ENCODE measurements at regions of chr14 and their contacts with region 1.

Region 1: DNA sequence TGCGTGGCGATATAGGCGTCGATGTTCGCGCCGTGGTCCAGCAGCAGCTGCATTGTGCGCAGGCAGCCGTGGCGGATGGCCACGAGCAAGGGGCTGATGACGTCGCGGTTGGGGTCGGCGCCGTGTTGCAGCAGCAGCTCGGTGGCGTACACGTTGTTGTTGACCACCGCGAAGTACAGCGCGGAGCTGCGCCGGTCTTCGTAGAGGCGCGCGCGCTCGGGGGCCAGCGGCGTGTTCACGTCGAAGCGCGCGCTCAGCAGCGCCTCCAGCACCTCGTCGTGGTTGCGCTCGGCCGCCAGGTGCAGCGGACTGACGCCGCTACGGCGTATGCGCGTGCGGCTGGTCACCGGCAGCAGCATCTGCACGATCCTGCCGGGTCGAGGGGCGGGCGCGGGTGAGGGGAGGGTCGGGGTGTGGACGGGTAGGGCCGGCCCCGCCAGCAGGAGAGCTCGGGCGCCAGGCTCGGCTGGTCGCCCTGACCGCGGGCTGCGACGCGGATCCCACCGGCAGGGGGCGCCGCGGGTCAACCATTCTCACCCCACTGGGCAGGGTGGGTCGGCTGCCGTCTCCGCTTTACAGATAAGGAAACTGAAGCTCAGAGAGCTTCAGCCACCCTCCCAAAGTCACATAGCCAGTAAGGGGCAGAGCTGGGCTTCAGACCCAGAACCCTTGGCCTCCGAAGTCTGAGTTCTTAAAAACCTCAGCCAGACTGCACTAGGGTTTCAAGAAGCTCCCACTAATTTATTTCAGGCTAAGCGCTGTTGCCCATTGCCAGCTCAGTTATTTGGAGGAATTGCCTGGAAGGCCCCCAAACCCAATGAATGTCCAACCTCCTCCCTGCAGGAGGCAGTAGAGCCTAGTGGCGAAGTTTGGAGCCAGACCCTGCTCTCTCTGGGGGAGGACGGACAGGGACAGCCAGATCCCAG is 12.4 kb downstream of the FAM181A start:
- DNase-seq: peak; percentile 84 to 92 (median 85)
- H3K4me3 ChIP-seq: peak overlapping the region in 1 of 2 donors; percentile 41
- H3K4me3 Mint-ChIP-seq: peak overlapping the region; percentile 53 to 80 (median 72)
- H3K27ac ChIP-seq: no peak overlapping the region
- H3K27ac Mint-ChIP-seq: peak overlapping the region in 3 of 7 donors; percentile 41 to 53 (median 41)
- H3K4me1 ChIP-seq: peaks cover 3% of the 10 kb centered on the region
- H3K4me1 Mint-ChIP-seq: peaks cover 2 to 13% (median 8%) of the 10 kb centered on the region in 4 donors
- H3K27me3 ChIP-seq: no peaks in the 10 kb centered on the region
- H3K27me3 Mint-ChIP-seq: no peaks in the 10 kb centered on the region

Region 2: GRCh38 chr14:93811676-93812075 is 127.9 kb before region 1 on chr14:
- CTCF ChIA-PET with region 1: no interaction called
- POLR2A ChIA-PET with region 1: no interaction called
- intact Hi-C with region 1: no loop called
- DNase-seq: no peak
- H3K4me3 ChIP-seq: no peak overlapping the region
- H3K4me3 Mint-ChIP-seq: no peak overlapping the region
- H3K27ac ChIP-seq: no peak overlapping the region
- H3K27ac Mint-ChIP-seq: no peak overlapping the region
- H3K4me1 ChIP-seq: no peaks in the 10 kb centered on the region
- H3K4me1 Mint-ChIP-seq: peaks cover 0 to 2% (median under 1%) of the 10 kb centered on the region in 4 donors
- H3K27me3 ChIP-seq: no peaks in the 10 kb centered on the region
- H3K27me3 Mint-ChIP-seq: peaks cover 2 to 9% of the 10 kb centered on the region in 2 donors

Region 3: GRCh38 chr14:93959239-93960107 is 19.9 kb after region 1 on chr14:
- CTCF ChIA-PET with region 1: interaction called, 1,377 read pairs
- POLR2A ChIA-PET with region 1: interaction called, 87 read pairs
- intact Hi-C with region 1: loop called (anchors 1 kb)
- DNase-seq: peak; percentile 89 to 99 (median 91)
- H3K4me3 ChIP-seq: peak overlapping the region; percentile 18 to 21
- H3K4me3 Mint-ChIP-seq: peak overlapping the region; percentile 75 to 89 (median 82)
- H3K27ac ChIP-seq: peak overlapping the region; percentile 77
- H3K27ac Mint-ChIP-seq: peak overlapping the region; percentile 96 to 100 (median 99)
- H3K4me1 ChIP-seq: peaks cover 100% of the 10 kb centered on the region
- H3K4me1 Mint-ChIP-seq: peaks cover 80 to 100% (median 93%) of the 10 kb centered on the region in 4 donors
- H3K27me3 ChIP-seq: no peaks in the 10 kb centered on the region
- H3K27me3 Mint-ChIP-seq: no peaks in the 10 kb centered on the region

Region 4: GRCh38 chr14:93975791-93976476 is 36.4 kb after region 1 on chr14:
- CTCF ChIA-PET with region 1: interaction called, 1,377 read pairs
- POLR2A ChIA-PET with region 1: interaction called, 146 read pairs
- intact Hi-C with region 1: no loop called
- DNase-seq: peak in 2 of 5 donors; percentile 17 to 40
- H3K4me3 ChIP-seq: peak overlapping the region; percentile 30 to 53
- H3K4me3 Mint-ChIP-seq: peak overlapping the region; percentile 58 to 84 (median 76)
- H3K27ac ChIP-seq: peak overlapping the region; percentile 10
- H3K27ac Mint-ChIP-seq: peak overlapping the region in 6 of 7 donors; percentile 5 to 96 (median 56)
- H3K4me1 ChIP-seq: peaks cover 79% of the 10 kb centered on the region
- H3K4me1 Mint-ChIP-seq: peaks cover 52 to 80% (median 66%) of the 10 kb centered on the region in 4 donors
- H3K27me3 ChIP-seq: no peaks in the 10 kb centered on the region
- H3K27me3 Mint-ChIP-seq: no peaks in the 10 kb centered on the region

Region 5: GRCh38 chr14:94011795-94012194 is 72.2 kb after region 1 on chr14:
- CTCF ChIA-PET with region 1: interaction called, 28 read pairs
- POLR2A ChIA-PET with region 1: interaction called, 5 read pairs
- intact Hi-C with region 1: no loop called
- DNase-seq: peak; percentile 52 to 63 (median 56)
- H3K4me3 ChIP-seq: no peak overlapping the region
- H3K4me3 Mint-ChIP-seq: peak overlapping the region in 7 of 8 donors; percentile 38 to 74 (median 62)
- H3K27ac ChIP-seq: no peak overlapping the region
- H3K27ac Mint-ChIP-seq: peak overlapping the region in 4 of 7 donors; percentile 3 to 68 (median 56)
- H3K4me1 ChIP-seq: peaks cover 51% of the 10 kb centered on the region
- H3K4me1 Mint-ChIP-seq: peaks cover 34 to 58% (median 47%) of the 10 kb centered on the region in 4 donors
- H3K27me3 ChIP-seq: no peaks in the 10 kb centered on the region
- H3K27me3 Mint-ChIP-seq: no peaks in the 10 kb centered on the region

Region 6: GRCh38 chr14:94026173-94026888 is 86.8 kb after region 1 on chr14 and contains the start of gene OTUB2:
- CTCF ChIA-PET with region 1: interaction called, 29 read pairs
- POLR2A ChIA-PET with region 1: interaction called, 4 read pairs
- intact Hi-C with region 1: no loop called
- DNase-seq: peak; percentile 96 to 97 (median 97)
- H3K4me3 ChIP-seq: peak within 1 kb of the TSS in 1 of 2 donors; percentile 56
- H3K4me3 Mint-ChIP-seq: peak within 1 kb of the TSS; percentile 81 to 88 (median 84)
- H3K27ac ChIP-seq: peak within 1 kb of the TSS; percentile 13
- H3K27ac Mint-ChIP-seq: peak within 1 kb of the TSS in 6 of 7 donors; percentile 42 to 89 (median 74)
- H3K4me1 ChIP-seq: peaks cover 45% of the 10 kb centered on the region
- H3K4me1 Mint-ChIP-seq: peaks cover 30 to 55% (median 42%) of the 10 kb centered on the region in 4 donors
- H3K27me3 ChIP-seq: no peaks in the 10 kb centered on the region
- H3K27me3 Mint-ChIP-seq: no peaks in the 10 kb centered on the region
- total RNA-seq, gene OTUB2: 0.42 to 0.67 TPM

Region 7: GRCh38 chr14:94129111-94129757 is 189.7 kb after region 1 on chr14 and contains the start of gene IFI27L2:
- CTCF ChIA-PET with region 1: interaction called, 10 read pairs
- POLR2A ChIA-PET with region 1: interaction called, 3 read pairs
- intact Hi-C with region 1: no loop called
- DNase-seq: peak; percentile 34 to 80 (median 46)
- H3K4me3 ChIP-seq: peak within 1 kb of the TSS; percentile 50 to 82
- H3K4me3 Mint-ChIP-seq: peak within 1 kb of the TSS; percentile 86 to 93 (median 90)
- H3K27ac ChIP-seq: peak within 1 kb of the TSS; percentile 46
- H3K27ac Mint-ChIP-seq: peak within 1 kb of the TSS; percentile 77 to 88 (median 84)
- H3K4me1 ChIP-seq: peaks cover 18% of the 10 kb centered on the region
- H3K4me1 Mint-ChIP-seq: peaks cover 12 to 25% (median 20%) of the 10 kb centered on the region in 4 donors
- H3K27me3 ChIP-seq: no peaks in the 10 kb centered on the region
- H3K27me3 Mint-ChIP-seq: no peaks in the 10 kb centered on the region
- total RNA-seq, gene IFI27L2: 34.0 to 38.2 TPM

Region 8: GRCh38 chr14:94180655-94181271 is 241.2 kb after region 1 on chr14:
- CTCF ChIA-PET with region 1: interaction called, 6 read pairs
- POLR2A ChIA-PET with region 1: no interaction called
- intact Hi-C with region 1: loop called (anchors 1 kb)
- DNase-seq: peak; percentile 68 to 81 (median 73)
- H3K4me3 ChIP-seq: peak overlapping the region in 1 of 2 donors; percentile 46
- H3K4me3 Mint-ChIP-seq: peak overlapping the region; percentile 2 to 79 (median 58)
- H3K27ac ChIP-seq: peak overlapping the region; percentile 29
- H3K27ac Mint-ChIP-seq: peak overlapping the region; percentile 18 to 91 (median 66)
- H3K4me1 ChIP-seq: peaks cover 10% of the 10 kb centered on the region
- H3K4me1 Mint-ChIP-seq: peaks cover 10 to 23% (median 16%) of the 10 kb centered on the region in 4 donors
- H3K27me3 ChIP-seq: peaks cover 2% of the 10 kb centered on the region
- H3K27me3 Mint-ChIP-seq: peaks cover 2 to 6% of the 10 kb centered on the region in 2 donors

Region 9: DNA sequence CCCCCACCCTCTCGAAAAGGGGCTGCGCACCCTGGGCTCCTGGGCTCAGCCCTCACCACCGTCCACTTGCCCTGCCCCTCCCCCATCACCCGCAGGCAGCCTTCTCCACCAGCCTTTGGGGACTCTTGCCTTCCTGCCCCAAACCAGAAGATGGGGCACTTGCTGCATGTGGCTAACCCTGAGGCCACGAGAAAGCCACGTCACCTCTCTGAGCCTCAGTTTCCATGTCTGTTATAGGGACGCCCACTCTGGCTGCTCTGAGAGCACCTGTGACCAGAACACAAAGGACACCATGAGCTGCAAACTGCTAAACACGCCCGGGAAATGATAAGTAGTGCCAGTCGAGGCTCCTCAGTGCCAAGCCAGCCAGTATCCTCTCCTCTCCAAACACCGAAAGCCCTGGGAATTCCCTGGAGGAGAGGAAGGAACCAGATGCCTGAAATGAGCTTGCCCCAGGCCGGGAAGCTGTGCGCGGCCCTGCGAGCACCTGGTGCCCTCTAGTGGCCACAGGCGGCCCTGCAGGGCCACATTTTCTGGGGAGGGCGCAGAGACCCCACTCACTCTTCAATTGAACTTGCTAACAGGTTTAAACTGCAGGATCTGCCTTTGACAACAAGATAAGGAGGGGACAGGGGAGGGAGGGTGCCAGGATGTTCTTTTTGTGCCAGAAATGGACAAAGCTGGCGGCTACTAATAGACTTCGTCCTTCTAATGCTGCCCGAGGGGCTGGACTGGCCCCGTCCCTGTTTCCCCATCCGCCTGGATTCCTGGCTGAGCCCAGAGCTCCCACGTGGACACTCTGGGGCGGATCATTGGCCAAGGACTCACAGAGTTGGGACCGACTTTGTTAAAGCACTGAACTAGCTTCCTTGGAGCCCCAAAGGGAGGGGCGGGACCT is 546.6 kb after region 1 on chr14:
- CTCF ChIA-PET with region 1: no interaction called
- POLR2A ChIA-PET with region 1: no interaction called
- intact Hi-C with region 1: no loop called
- DNase-seq: peak in 4 of 5 donors; percentile 17 to 33 (median 26)
- H3K4me3 ChIP-seq: no peak overlapping the region
- H3K4me3 Mint-ChIP-seq: no peak overlapping the region
- H3K27ac ChIP-seq: no peak overlapping the region
- H3K27ac Mint-ChIP-seq: no peak overlapping the region
- H3K4me1 ChIP-seq: no peaks in the 10 kb centered on the region
- H3K4me1 Mint-ChIP-seq: peaks cover 0 to 5% (median 2%) of the 10 kb centered on the region in 4 donors
- H3K27me3 ChIP-seq: no peaks in the 10 kb centered on the region
- H3K27me3 Mint-ChIP-seq: peaks cover 16 to 19% of the 10 kb centered on the region in 2 donors

Measured in CD4-positive, alpha-beta memory T cell (primary cell).